WTC11 (cell line): ENCODE measurements at regions of chr22 and their contacts with region 1.

Region 1: GRCh38 chr22:22959147-22959827 is 71.7 kb downstream of the IGLL5 start:
- DNase-seq: peak; percentile 84
- ATAC-seq: peak; percentile 34
- H3K4me3 Mint-ChIP-seq: no peak overlapping the region
- H3K27ac Mint-ChIP-seq: no peak overlapping the region
- H3K4me1 Mint-ChIP-seq: peaks cover 9% of the 10 kb centered on the region
- H3K27me3 Mint-ChIP-seq: peaks cover 52% of the 10 kb centered on the region
- CTCF ChIP-seq: peak; percentile 83

Region 2: GRCh38 chr22:22770280-22770871 is 188.9 kb before region 1 on chr22:
- CTCF ChIA-PET with region 1: interaction called, 65 read pairs
- POLR2A ChIA-PET with region 1: no interaction called
- DNase-seq: peak; percentile 84
- ATAC-seq: peak; percentile 88
- H3K4me3 Mint-ChIP-seq: no peak overlapping the region
- H3K27ac Mint-ChIP-seq: no peak overlapping the region
- H3K4me1 Mint-ChIP-seq: no peaks in the 10 kb centered on the region
- H3K27me3 Mint-ChIP-seq: peaks cover 99% of the 10 kb centered on the region
- CTCF ChIP-seq: peak; percentile 73; the same call in 1 of the 2 replicates

Region 3: GRCh38 chr22:22855617-22856308 is 103.5 kb before region 1 on chr22:
- CTCF ChIA-PET with region 1: interaction called, 91 read pairs
- POLR2A ChIA-PET with region 1: no interaction called
- DNase-seq: peak; percentile 64
- ATAC-seq: peak; percentile 92
- H3K4me3 Mint-ChIP-seq: no peak overlapping the region
- H3K27ac Mint-ChIP-seq: no peak overlapping the region
- H3K4me1 Mint-ChIP-seq: no peaks in the 10 kb centered on the region
- H3K27me3 Mint-ChIP-seq: peaks cover 86% of the 10 kb centered on the region
- CTCF ChIP-seq: peak; percentile 46; the same call in 1 of the 2 replicates

Region 4: DNA sequence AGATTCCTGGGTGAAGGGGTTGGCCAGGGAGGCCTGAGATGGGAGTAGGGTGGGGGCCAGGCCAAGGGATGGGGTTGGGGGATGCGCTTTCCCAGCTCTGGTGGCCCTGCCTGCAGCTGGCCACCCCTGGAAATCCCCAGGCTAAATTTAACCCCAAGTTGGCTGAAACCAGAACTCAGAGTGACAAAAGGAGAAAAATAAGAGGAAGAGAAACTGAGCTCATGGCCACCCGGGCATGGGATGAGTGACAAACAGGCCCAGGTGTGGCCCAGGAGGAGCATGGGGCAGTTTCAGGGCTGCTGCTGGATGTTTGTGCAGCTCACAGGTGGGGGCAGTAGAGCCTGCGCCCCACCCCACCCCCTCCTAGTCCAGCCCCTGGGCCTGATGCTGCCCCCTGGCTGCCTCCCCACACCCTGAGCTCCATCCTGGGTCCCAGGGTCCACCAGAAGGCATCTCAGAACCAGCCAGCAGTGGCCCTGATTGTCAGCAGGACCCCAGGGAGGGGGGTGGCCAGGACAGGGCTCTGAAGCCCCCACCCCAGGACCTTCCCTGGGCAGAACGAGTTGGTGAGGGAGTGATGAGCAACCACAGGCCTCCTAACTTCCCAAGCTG is 23.6 kb before region 1 on chr22:
- CTCF ChIA-PET with region 1: interaction called, 22 read pairs
- POLR2A ChIA-PET with region 1: no interaction called
- DNase-seq: peak; percentile 33
- ATAC-seq: peak; percentile 81
- H3K4me3 Mint-ChIP-seq: no peak overlapping the region
- H3K27ac Mint-ChIP-seq: no peak overlapping the region
- H3K4me1 Mint-ChIP-seq: peaks cover 5% of the 10 kb centered on the region
- H3K27me3 Mint-ChIP-seq: peaks cover 47% of the 10 kb centered on the region
- CTCF ChIP-seq: no peak

Region 5: DNA sequence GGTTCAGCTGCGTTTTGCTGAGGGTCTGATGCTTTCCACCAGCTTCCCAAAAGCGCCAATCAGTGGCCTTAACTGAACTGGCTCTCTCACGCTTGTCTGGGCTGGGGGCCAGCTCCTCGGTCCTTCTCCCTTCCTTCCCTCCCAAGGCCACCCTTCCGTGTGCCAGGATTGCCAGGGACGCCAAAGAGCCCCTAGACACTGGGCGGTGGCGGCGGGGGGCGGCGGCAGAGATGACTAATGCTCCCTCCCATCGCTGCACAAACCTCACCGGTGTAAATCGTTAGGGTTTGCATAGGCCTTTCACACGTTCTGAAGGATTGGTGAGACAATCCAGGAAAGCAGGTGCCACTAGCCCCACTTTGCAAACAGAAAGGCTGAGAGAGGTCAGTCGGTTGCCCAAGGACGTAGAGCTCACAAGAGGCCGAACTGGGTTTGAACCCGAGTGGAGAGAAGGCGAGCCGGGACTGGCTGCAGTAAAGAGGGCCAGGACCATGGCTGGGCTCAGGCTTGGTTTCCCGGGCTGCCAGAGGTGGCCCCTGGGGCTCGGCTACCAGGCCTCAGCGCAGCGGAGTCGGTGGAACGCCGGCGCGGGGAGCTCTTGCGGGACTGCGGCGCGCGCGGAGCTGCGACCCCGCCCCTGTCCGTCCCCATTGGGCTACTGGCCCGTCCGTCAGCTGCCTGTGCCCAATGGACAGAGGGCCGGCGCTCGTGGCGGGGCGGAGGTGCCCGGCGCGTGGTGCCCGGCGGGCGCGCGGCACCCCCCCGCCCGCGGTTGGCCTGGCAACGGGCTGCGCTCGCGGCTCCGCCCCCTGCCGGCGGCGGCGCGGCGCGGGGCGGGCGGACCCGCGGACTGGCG is 110.4 kb after region 1 on chr22:
- CTCF ChIA-PET with region 1: interaction called, 36 read pairs
- POLR2A ChIA-PET with region 1: no interaction called
- DNase-seq: peak; percentile 93
- ATAC-seq: peak; percentile 95
- H3K4me3 Mint-ChIP-seq: peak overlapping the region; percentile 84
- H3K27ac Mint-ChIP-seq: no peak overlapping the region
- H3K4me1 Mint-ChIP-seq: peaks cover 17% of the 10 kb centered on the region
- H3K27me3 Mint-ChIP-seq: peaks cover 46% of the 10 kb centered on the region
- CTCF ChIP-seq: no peak

Region 6: GRCh38 chr22:23144932-23145873 is 185.9 kb after region 1 on chr22 and contains the start of gene RAB36:
- CTCF ChIA-PET with region 1: interaction called, 14 read pairs
- POLR2A ChIA-PET with region 1: no interaction called
- DNase-seq: peak; percentile 100
- ATAC-seq: peak; percentile 82
- H3K4me3 Mint-ChIP-seq: peak within 1 kb of the TSS; percentile 73
- H3K27ac Mint-ChIP-seq: no peak within 1 kb of the TSS
- H3K4me1 Mint-ChIP-seq: peaks cover 37% of the 10 kb centered on the region
- H3K27me3 Mint-ChIP-seq: peaks cover 36% of the 10 kb centered on the region
- CTCF ChIP-seq: no peak
- total RNA-seq, gene RAB36: 0.89 to 1.8 TPM (median 1.1 TPM) in 3 replicates